ENCODE measurements at regions of chr9 and their contacts with region 1.

Region 1: DNA sequence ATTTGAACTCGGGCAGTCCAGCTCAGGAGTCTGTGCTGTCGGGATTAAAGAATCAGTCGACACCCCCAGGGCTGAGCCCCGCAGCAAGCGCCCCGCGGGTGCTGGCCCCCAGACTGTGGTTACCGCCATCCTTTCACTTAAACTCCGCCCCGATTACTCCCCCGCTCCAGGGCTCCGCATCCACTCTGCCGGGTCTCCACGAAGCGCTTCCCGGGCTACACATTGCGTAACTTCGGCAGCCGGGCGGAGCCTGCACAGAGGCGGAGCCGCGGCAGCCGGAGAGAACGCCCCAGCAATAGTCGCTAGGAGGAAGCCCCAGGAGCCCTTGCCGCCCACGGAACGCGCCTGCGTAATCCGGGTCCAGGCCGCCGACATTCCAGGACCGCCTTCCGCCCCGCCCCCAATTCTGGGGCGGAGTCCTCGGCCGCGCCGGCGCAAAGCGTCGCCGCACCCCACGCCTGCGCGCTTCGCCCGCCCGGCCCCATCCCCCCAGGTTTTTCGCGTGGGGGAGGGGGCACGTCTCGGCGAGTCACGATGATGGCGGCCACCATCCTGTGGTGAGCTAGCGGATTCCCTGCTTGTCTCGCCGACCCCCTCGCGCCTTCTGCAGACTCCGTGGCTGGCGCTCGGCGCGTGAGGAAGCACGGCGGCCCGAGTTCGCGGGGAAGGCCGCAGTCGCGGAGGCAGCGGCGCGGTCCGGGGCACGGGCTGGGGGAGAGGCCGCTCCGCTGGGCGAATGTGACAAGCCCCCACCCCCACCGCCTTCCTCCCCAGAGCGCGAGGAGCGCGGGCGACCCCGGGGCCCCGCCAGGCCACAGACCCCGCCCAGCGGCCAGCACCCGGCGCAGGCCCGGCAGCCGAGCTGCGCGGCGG is at the start of gene RAD23B:
- DNase-seq: peak; percentile 99
- H3K4me3 Mint-ChIP-seq: peak within 1 kb of the TSS; percentile 98
- H3K27ac Mint-ChIP-seq: peak within 1 kb of the TSS; percentile 96
- H3K4me1 Mint-ChIP-seq: peaks cover 41% of the 10 kb centered on the region
- H3K27me3 Mint-ChIP-seq: no peaks in the 10 kb centered on the region
- total RNA-seq, gene RAD23B: 148 and 150 TPM in 2 replicates

Region 2: DNA sequence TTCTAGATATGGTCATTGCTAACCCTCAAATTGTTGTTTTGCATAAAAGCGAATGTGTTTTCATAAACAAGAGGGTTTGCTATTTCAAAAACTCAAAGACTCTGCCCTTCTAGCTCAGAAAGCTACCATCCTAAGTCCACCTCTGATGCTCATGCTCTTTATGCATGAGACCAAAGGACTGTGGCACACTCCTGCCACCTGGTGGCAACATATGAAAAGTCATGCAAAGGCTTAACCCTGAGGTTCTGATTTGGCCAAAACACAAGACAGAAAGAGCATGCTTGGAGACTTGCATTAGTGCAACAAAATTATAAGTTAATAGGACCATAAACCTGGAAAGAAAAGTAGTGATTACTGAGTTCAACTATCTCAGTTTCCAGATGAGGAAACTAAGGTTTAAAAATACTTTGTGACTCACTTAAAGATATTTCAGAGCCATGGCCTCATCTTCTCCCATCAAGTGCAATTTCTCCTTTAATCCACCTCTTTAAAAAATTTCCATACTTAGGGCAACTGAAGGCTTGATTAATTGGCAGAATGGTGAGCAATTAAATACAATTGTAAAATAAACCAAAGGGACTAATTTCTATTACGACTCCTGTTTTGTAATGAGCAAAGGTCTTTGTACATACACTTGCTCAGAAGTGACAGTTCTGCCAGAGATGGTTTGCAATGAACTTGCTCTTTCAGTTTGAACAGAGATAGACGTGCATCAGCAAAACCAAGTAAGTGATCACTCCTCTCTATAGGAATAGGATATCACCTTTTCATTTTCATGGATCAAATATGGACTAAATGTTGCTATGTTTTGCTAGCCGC is 110.6 kb before region 1 on chr9:
- intact Hi-C with region 1: loop called (anchors 5 kb)
- DNase-seq: peak; percentile 89
- H3K4me3 Mint-ChIP-seq: no peak overlapping the region
- H3K27ac Mint-ChIP-seq: peak overlapping the region; percentile 54
- H3K4me1 Mint-ChIP-seq: peaks cover 9% of the 10 kb centered on the region
- H3K27me3 Mint-ChIP-seq: no peaks in the 10 kb centered on the region

Region 3: GRCh38 chr9:107299437-107299836 is 16.4 kb after region 1 on chr9:
- intact Hi-C with region 1: loop called (anchors 2 kb)
- DNase-seq: no peak
- H3K4me3 Mint-ChIP-seq: no peak overlapping the region
- H3K27ac Mint-ChIP-seq: no peak overlapping the region
- H3K4me1 Mint-ChIP-seq: peaks cover 26% of the 10 kb centered on the region
- H3K27me3 Mint-ChIP-seq: no peaks in the 10 kb centered on the region

Region 4: GRCh38 chr9:107323836-107324585 is 41.0 kb after region 1 on chr9:
- intact Hi-C with region 1: loop called (anchors 5 kb)
- DNase-seq: no peak
- H3K4me3 Mint-ChIP-seq: no peak overlapping the region
- H3K27ac Mint-ChIP-seq: peak overlapping the region; percentile 1
- H3K4me1 Mint-ChIP-seq: peaks cover 20% of the 10 kb centered on the region
- H3K27me3 Mint-ChIP-seq: no peaks in the 10 kb centered on the region

Region 5: DNA sequence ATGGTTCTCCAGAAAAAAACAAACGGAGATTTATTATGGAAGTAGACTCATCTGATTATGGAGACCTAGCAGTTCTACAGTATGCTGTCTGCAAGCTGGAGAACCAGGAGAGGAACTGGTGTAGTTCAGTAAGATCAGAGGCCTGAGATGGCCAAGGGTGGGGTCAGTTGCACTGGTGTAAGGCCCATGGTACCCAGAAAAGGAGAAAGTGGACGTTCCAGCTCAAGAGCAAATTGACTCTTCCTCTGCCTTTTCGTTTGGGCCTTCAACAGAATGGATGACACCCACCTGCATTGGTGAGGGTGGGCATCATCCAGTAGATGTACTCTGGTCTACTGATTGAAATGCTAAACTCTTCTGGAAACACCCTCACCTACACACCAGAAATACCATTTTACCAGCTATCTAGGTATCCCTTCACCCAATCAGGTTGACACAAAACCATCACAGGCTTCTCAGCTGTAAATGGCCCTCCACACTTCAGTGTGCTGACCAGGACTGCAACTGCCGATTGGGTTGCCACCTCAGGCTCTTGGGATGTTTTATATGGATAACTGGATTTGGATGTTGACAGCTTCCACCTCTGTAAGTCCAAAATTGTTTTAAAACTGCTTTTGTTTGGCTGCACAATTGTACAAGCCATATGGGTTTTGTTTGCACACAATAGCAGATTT is 51.3 kb after region 1 on chr9:
- intact Hi-C with region 1: no loop called
- DNase-seq: no peak
- H3K4me3 Mint-ChIP-seq: no peak overlapping the region
- H3K27ac Mint-ChIP-seq: no peak overlapping the region
- H3K4me1 Mint-ChIP-seq: peaks cover 2% of the 10 kb centered on the region
- H3K27me3 Mint-ChIP-seq: no peaks in the 10 kb centered on the region

Region 6: DNA sequence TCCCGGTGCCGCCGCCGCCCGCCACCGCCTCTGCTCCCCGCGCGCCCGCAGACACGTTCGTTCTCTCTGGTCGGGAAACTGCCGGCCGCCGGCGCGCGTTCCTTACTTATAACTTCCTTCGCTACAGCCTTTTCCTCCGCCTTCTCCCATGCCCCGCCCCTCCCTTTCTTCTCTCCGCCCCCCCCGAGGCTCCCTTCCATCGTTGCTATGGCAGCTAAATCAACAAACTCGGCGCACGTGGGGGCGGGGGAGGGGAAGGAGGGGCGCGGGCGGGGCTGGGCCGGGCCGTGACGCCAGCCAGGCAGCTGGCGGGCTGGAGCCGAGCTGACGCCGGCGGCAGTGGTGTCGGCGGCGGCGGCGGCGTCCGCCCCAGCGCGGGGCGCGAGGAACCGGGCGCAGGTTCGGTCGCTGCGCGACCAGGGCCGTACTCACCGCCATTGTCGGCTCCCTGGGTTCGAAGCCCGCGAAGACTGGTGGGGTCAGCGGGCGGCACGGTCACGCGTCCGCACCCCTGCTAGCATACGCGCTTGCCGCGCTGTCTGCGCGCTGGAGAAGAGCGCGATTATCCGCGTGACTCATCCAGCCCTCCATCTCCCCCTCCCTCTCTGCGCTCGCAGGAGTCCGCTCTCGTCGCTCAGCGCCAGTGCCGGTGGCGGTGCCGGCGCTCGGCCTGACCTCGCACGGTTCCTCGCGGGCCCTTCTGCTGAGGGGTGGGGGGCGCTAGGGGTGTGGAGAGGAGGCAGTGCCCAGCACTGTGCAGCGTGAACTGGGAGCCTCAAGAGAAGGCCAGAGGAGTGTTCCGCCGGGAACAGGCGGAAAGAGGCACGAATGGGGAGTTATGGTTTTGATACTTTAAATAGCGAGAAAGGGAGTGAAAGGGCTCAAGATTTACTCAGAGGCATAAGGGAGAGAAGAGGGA is 207.0 kb after region 1 on chr9 and contains the start of gene KLF4:
- intact Hi-C with region 1: loop called (anchors 5 kb)
- DNase-seq: peak; percentile 89
- H3K4me3 Mint-ChIP-seq: peak within 1 kb of the TSS; percentile 84
- H3K27ac Mint-ChIP-seq: peak within 1 kb of the TSS; percentile 65
- H3K4me1 Mint-ChIP-seq: peaks cover 12% of the 10 kb centered on the region
- H3K27me3 Mint-ChIP-seq: peaks cover 66% of the 10 kb centered on the region
- total RNA-seq, gene KLF4: 1.0 and 1.2 TPM in 2 replicates

Measured in activated CD4-positive, alpha-beta T cell treated with anti-CD3 and anti-CD28 coated beads, Interleukin-2, amount 10 ng/mL, durations not matched to agents 24 days and 14 days (primary cell).